ENCODE measurements at regions of chr12 and their contacts with region 1.

Region 1: DNA sequence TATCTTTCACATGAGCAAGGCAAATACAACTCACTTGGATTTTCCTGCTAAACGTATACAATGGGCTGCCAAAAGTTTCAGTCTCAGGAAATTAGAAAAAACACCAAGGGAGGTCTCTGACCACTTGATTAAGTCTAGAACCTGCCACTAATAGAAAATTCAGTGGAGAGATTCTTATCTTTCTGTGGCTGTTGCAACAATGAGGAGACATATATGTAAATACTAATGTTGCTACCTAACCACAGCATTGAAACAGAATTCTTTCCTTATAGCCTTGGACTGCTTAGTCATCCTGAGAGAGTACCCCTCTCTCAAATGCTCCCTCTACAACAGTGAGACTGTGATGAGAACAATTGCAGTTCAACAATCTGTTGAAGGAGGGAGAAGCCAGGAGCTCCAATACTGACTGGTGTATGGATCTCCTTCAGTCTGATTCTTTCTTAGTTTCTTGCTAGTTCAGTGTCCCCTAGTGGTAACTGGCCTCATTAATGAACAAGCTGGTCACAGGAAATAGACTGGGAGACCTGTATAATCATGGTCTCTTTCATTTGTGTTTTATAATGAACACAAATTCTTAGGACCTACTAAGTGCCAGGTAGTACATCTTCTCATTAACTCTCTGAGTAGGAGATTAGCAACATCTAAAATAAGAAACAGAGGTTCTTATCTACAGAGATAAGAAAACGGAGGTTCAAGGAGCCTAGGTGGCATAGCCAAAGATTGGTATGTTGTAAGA is 164.5 kb downstream of the SLC38A4 start:
- DNase-seq: peak in 2 of 4 experiments; percentile 40 to 67
- ATAC-seq: peak; percentile 94
- H3K4me3 ChIP-seq: no peak overlapping the region
- H3K27ac ChIP-seq: no peak overlapping the region; the same call in 2 of the 3 replicates
- H3K4me1 ChIP-seq: peaks cover 0 to 18% of the 10 kb centered on the region in 2 experiments; a peak in 3 of 5 replicates
- H3K27me3 ChIP-seq: no peaks in the 10 kb centered on the region
- CTCF ChIP-seq: peak; percentile 63 to 85 (median 74)
- EP300 ChIP-seq: no peak
- POLR2A ChIP-seq: no peak
- RAD21 ChIP-seq: peak; percentile 90 to 96

Region 2: DNA sequence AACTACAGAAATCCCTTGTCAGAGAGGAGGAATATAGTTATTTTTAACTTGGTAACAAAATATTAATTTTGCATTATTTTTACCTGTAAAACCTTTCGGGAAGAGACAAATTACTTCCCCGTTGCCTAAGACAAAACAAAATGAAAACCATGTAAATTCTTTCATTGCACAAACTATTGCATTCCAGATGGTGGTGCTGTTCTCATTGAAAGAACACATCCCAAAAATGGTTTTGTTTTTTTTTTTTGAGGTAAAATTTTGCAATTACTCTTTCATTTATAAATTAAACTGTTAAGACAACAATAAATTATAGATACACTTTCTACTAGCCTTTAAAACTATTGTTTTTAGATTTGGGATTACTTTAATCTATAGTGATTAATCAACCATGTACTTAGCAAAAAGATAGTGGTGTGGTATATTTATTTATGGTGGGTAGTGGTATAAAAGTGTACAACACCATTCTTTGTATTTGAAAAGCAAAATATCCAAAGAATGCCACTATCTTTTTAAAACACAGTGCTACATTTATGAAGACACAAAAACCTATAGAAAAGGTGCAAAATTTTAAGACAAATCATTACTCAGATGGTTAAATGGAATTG is 507.9 kb before region 1 on chr12:
- CTCF ChIA-PET with region 1: no interaction called
- POLR2A ChIA-PET with region 1: no interaction called
- in situ Hi-C with region 1: no loop called
- intact Hi-C with region 1: loop called (anchors 1 kb)
- DNase-seq: peak in 2 of 4 experiments; percentile 16 to 17
- ATAC-seq: no peak
- H3K4me3 ChIP-seq: no peak overlapping the region
- H3K27ac ChIP-seq: no peak overlapping the region
- H3K4me1 ChIP-seq: no peaks in the 10 kb centered on the region
- H3K27me3 ChIP-seq: no peaks in the 10 kb centered on the region
- CTCF ChIP-seq: peak; percentile 40 to 82 (median 52); a peak in 4 of 6 replicates
- EP300 ChIP-seq: no peak
- POLR2A ChIP-seq: no peak
- RAD21 ChIP-seq: peak; percentile 48 to 75; a peak in 3 of 4 replicates

Region 3: DNA sequence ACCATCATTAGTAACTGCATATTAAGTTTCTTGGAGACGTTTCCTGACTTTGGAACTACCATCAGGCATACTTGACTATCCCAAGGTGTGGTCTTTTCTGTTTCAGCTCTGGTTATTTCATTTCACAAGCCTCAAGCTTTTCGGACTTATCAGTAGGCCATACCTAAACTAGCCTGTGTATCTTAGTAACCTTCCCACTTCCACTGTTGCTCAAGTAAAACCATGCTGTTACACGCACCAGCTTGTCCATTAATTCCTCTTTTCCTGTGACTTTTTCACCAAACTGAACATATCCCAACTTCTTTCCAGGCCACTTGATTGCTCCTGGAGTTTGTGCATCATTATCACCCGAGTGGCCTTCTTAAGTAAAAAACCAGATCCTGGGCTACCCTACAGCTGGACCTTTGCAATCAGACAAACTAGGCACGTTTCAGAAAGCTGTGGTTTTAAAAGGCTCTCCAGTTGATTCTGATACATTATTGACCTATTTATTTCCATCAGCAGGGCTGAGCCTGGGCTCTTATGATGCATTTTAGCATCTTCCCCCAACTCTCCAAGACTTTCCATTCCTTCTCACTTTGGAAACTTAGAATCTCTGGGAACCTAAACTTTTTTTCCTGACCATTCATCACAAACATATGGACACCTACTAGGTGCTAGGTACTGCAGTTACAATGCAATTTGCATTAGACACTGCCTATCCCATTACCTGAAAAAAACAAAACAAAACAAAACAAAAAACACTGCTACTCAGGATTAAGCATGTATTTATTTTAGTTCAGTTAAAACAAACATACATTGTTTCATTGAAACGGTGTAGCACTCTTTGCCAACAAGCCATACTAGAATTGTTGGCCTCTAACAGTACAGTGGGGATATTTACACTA is 303.6 kb before region 1 on chr12:
- CTCF ChIA-PET with region 1: interaction called, 3 read pairs
- POLR2A ChIA-PET with region 1: interaction called, 5 read pairs
- in situ Hi-C with region 1: loop called (anchors 10 kb)
- intact Hi-C with region 1: loop called (anchors 5 kb)
- DNase-seq: no peak
- ATAC-seq: peak; percentile 72
- H3K4me3 ChIP-seq: no peak overlapping the region
- H3K27ac ChIP-seq: no peak overlapping the region
- H3K4me1 ChIP-seq: no peaks in the 10 kb centered on the region
- H3K27me3 ChIP-seq: no peaks in the 10 kb centered on the region
- CTCF ChIP-seq: no peak
- EP300 ChIP-seq: no peak
- POLR2A ChIP-seq: peak; percentile 76
- RAD21 ChIP-seq: 0 out of 4 replicates have a peak, but pooled peaks of 1 of the 2 experiments have one; percentile 1

Region 4: GRCh38 chr12:46430340-46430948 is 230.8 kb before region 1 on chr12:
- CTCF ChIA-PET with region 1: no interaction called
- POLR2A ChIA-PET with region 1: no interaction called
- in situ Hi-C with region 1: no loop called
- intact Hi-C with region 1: loop called (anchors 2 kb)
- DNase-seq: peak; percentile 24 to 77 (median 47)
- ATAC-seq: peak; percentile 79
- H3K4me3 ChIP-seq: no peak overlapping the region
- H3K27ac ChIP-seq: peak overlapping the region; percentile 59
- H3K4me1 ChIP-seq: peaks cover 13 to 37% of the 10 kb centered on the region in 2 experiments
- H3K27me3 ChIP-seq: no peaks in the 10 kb centered on the region
- CTCF ChIP-seq: no peak
- EP300 ChIP-seq: peak; percentile 96
- POLR2A ChIP-seq: no peak
- RAD21 ChIP-seq: no peak; a peak in 2 of 4 replicates

Region 5: GRCh38 chr12:46523863-46524770 is 137.2 kb before region 1 on chr12:
- CTCF ChIA-PET with region 1: no interaction called
- POLR2A ChIA-PET with region 1: no interaction called
- in situ Hi-C with region 1: no loop called
- intact Hi-C with region 1: loop called (anchors 10 kb)
- DNase-seq: peak; percentile 29 to 86 (median 43)
- ATAC-seq: peak; percentile 83
- H3K4me3 ChIP-seq: no peak overlapping the region
- H3K27ac ChIP-seq: peak overlapping the region; percentile 49; the same call in 1 of the 3 replicates
- H3K4me1 ChIP-seq: peaks cover 0 to 22% of the 10 kb centered on the region in 2 experiments; a peak in 4 of 5 replicates
- H3K27me3 ChIP-seq: no peaks in the 10 kb centered on the region
- CTCF ChIP-seq: no peak
- EP300 ChIP-seq: peak; percentile 76; the same call in 1 of the 2 replicates
- POLR2A ChIP-seq: no peak
- RAD21 ChIP-seq: peak in 1 of 2 experiments; percentile 28; a peak in 1 of 4 replicates

Region 6: DNA sequence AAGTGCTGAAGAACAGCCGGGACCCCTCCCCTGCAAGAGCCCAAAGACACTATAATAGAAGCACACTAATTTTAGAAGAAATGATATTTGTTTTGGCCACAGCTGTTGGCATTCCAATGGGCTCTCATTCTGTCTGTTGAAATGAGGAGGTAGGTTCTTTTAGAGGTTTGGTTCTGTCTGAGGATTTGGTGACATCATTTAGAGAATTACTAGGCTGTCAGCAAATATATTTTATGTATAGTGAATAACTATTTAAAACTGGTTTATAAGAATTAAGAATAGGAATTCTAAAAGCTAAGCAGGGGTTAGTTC is 88.0 kb before region 1 on chr12:
- CTCF ChIA-PET with region 1: no interaction called
- POLR2A ChIA-PET with region 1: no interaction called
- in situ Hi-C with region 1: no loop called
- intact Hi-C with region 1: no loop called
- DNase-seq: no peak
- ATAC-seq: no peak
- H3K4me3 ChIP-seq: no peak overlapping the region
- H3K27ac ChIP-seq: no peak overlapping the region
- H3K4me1 ChIP-seq: peaks cover 4 to 10% of the 10 kb centered on the region in 2 experiments; a peak in 4 of 5 replicates
- H3K27me3 ChIP-seq: no peaks in the 10 kb centered on the region
- CTCF ChIP-seq: no peak
- EP300 ChIP-seq: no peak
- POLR2A ChIP-seq: no peak
- RAD21 ChIP-seq: no peak